ENCODE measurements at regions of chr9 and their contacts with region 1.

Region 1: DNA sequence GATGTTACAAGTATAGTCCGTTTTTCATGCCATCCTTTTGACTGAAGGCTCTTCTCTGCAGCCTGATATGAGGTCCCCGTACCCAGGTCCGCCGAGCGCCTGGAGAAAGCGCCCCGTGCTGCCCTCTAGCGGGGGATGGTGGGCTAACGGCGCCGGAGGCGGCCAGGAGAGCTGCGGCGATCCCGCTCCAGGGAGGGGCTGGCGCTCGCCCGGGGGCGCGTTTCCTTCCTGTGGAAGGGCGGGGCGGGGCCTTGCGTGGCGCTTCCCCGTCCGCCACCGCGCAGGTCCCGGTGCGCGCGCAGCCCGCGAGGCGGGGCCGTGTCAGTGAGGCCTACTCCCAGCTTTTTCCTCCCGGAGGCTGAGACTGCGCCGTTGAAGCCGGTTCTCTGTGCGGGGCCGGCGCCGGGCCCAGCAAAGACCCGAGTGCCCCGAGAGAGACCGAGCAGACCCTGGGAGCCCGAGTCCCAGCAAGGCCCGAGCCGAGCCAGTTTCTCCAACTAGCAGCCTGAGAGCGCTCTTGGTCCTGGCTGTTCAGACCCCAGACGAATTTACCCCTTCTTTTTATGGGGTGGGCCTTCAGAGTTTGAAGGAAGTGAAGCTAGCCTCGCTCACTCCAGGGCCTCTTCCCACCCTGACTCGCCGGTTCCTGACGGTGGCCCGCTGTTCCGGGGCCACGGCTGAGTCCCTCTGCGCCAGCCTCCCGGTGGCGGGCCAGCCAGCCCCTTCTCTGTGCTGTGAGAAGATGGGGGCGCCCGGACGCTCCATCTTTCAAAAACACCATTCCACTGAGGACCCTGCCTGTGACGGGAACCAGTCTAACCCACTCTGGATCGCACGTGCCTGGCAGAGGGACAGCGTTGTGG is 9.7 kb upstream of the PHF2 start:
- DNase-seq: peak; percentile 99
- H3K4me3 Mint-ChIP-seq: peak overlapping the region; percentile 80
- H3K27ac Mint-ChIP-seq: peak overlapping the region; percentile 81
- H3K4me1 Mint-ChIP-seq: peaks cover 34% of the 10 kb centered on the region
- H3K27me3 Mint-ChIP-seq: no peaks in the 10 kb centered on the region

Region 2: DNA sequence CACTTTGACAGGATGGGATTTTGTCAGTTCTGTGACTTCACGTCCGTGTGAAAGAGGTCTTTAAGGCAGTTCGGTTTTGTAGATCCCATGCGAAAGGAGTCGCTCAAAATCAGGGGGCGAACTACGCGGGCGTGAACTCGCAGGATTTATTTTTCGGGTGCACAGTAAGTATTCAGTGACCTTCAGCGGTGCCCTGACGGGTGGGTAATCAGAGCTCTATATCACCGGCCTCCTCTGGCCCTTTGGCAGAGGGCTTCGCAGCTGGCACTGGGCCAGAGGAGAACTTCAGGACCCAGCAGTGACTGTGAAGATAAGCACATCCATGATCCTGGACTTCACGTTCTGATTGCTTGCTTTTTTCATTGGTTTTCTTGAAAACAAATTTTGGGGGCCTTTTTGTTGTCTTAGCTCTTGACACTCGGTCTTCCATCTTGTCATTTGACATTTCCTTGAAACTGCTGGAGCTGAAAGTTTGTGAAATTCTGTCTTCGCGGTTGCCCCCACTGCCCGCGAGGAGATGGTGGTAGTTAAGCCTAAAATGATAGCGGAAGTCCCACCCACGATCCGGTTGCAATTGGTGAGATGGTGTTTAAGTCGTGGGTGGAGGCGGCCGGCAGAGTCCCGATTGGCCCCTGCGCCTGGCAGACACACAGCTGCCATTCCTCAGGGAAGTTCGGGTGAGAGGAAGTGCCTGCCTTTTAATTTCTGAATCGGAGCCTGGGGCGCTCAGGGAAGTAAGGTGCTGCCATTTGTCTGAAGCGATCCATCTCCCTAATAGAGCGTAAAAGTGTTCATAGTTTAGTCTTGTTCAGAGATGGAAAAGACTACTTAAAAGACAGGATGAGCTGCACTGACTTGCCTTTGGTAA is 113.4 kb before region 1 on chr9 and contains the start of gene FAM120AOS:
- CTCF ChIA-PET with region 1: interaction called, 22 read pairs
- POLR2A ChIA-PET with region 1: interaction called, 49 read pairs
- DNase-seq: peak; percentile 88
- H3K4me3 Mint-ChIP-seq: peak within 1 kb of the TSS; percentile 91
- H3K27ac Mint-ChIP-seq: peak within 1 kb of the TSS; percentile 92
- H3K4me1 Mint-ChIP-seq: peaks cover 55% of the 10 kb centered on the region
- H3K27me3 Mint-ChIP-seq: no peaks in the 10 kb centered on the region
- total RNA-seq, gene FAM120AOS: 41.4 to 43.1 TPM

Region 3: DNA sequence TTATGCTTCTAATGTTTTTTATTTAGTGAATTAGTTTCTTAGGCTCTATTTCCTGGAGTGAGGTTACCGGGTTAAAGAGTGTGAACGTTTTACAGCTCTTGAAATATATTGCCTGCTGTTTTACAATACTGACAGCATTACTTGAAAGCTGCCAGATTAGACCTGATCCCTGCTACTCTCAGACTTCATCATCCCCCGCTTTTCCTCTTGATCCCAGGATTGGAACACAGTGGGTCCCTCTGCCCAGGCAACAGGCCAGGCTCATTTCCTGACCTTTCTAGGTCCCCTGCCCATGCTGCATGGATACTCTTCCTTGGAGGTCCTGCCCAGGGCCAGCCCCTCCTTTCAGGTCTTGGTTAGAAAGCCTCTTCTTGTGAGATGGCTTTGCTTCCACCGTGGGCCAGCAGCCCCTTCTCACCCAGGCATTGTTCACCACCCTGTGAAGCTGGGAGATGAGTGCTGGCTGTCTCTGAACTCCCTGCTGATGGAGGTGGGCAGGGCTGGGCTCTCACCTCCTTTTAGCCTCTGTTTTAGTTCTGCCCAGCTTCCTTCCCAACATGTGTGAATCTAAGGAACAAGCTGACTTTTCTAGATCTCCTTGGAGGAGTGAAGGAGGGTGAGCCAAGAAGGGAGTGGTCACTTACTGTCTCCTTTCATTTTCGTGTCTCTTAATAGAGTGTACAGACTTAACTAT is 97.7 kb before region 1 on chr9:
- CTCF ChIA-PET with region 1: interaction called, 18 read pairs
- POLR2A ChIA-PET with region 1: interaction called, 16 read pairs
- DNase-seq: no peak
- H3K4me3 Mint-ChIP-seq: no peak overlapping the region
- H3K27ac Mint-ChIP-seq: peak overlapping the region; percentile 50
- H3K4me1 Mint-ChIP-seq: peaks cover 72% of the 10 kb centered on the region
- H3K27me3 Mint-ChIP-seq: no peaks in the 10 kb centered on the region

Region 4: DNA sequence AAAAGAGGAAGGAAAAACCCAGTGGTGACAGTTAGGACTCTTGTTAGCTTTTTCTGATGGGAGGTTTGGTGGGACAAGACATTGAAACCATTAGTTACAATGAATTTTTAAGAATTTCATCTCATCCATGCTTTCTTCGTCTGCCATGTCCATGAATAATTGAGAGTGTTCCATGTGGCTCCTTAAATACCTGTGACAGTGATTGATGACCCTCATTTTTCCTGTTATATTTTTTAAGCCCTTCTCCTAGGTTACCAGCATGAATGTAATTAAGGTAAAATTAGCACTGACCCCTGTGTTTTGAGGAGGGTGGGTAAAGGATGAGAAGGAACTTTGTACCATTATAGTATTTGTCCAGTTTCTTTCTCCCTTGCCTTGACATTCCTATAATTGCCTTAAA is 13.7 kb before region 1 on chr9:
- CTCF ChIA-PET with region 1: interaction called, 18 read pairs
- POLR2A ChIA-PET with region 1: interaction called, 14 read pairs
- DNase-seq: no peak
- H3K4me3 Mint-ChIP-seq: no peak overlapping the region
- H3K27ac Mint-ChIP-seq: no peak overlapping the region
- H3K4me1 Mint-ChIP-seq: no peaks in the 10 kb centered on the region
- H3K27me3 Mint-ChIP-seq: no peaks in the 10 kb centered on the region

Region 5: GRCh38 chr9:93582115-93582514 is 15.5 kb after region 1 on chr9:
- CTCF ChIA-PET with region 1: interaction called, 6 read pairs
- POLR2A ChIA-PET with region 1: interaction called, 45 read pairs
- DNase-seq: peak; percentile 7
- H3K4me3 Mint-ChIP-seq: no peak overlapping the region
- H3K27ac Mint-ChIP-seq: no peak overlapping the region
- H3K4me1 Mint-ChIP-seq: peaks cover 16% of the 10 kb centered on the region
- H3K27me3 Mint-ChIP-seq: no peaks in the 10 kb centered on the region

Measured in activated CD4-positive, alpha-beta memory T cell treated with anti-CD3 and anti-CD28 coated beads, Interleukin-2, amount 10 ng/mL, durations not matched to agents 7 days and 5 days (primary cell).